Activated CD8-positive, alpha-beta T cell treated with anti-CD3 and anti-CD28 coated beads for 36 hours (primary cell): ENCODE measurements at regions of chr17 and their contacts with region 1.

Region 1: GRCh38 chr17:76467366-76467765 is at the start of gene AANAT:
- DNase-seq: no peak
- ATAC-seq: no peak
- H3K4me3 Mint-ChIP-seq: no peak within 1 kb of the TSS
- H3K27ac Mint-ChIP-seq: no peak within 1 kb of the TSS
- H3K4me1 Mint-ChIP-seq: peaks cover 2% of the 10 kb centered on the region
- H3K27me3 Mint-ChIP-seq: no peaks in the 10 kb centered on the region
- CTCF ChIP-seq: no peak
- total RNA-seq, gene AANAT: 0.34 TPM in 1 of 2 experiments, not detected in the other

Region 2: GRCh38 chr17:76452660-76453430 is 14.5 kb before region 1 on chr17 and contains the start of gene UBE2O:
- CTCF ChIA-PET with region 1: interaction called, 14 read pairs
- POLR2A ChIA-PET with region 1: interaction called, 3 read pairs
- intact Hi-C with region 1: no loop called
- DNase-seq: peak; percentile 93
- ATAC-seq: peak; percentile 97
- H3K4me3 Mint-ChIP-seq: peak within 1 kb of the TSS; percentile 90
- H3K27ac Mint-ChIP-seq: peak within 1 kb of the TSS; percentile 55
- H3K4me1 Mint-ChIP-seq: peaks cover 37% of the 10 kb centered on the region
- H3K27me3 Mint-ChIP-seq: no peaks in the 10 kb centered on the region
- CTCF ChIP-seq: peak; percentile 42
- total RNA-seq, gene UBE2O: 36.8 to 39.5 TPM

Region 3: DNA sequence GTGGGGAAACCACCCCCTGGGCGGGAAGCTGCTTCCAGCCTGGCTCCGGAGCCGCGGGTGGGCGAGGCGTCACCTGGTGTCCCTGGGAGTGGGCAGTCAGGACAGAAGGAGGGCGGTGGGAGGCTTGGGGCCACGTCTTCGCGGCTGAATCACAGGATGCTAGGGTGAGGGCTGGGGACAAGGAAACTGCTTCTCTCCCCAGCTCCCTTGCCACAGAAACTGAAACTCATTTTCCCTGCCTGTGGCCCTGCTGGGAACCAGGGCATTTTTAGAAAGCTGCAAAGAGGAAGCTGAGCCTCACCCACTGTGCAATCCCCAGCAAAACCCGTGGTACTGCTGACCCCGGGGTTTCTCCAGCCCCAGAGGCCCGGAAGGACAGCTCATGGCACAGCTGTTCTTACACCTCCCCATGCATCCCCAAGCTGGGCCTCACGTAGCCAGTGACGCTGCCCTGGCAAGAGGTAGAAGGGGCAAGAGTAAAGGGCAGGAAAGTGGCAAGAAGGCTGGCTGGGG is 25.7 kb after region 1 on chr17:
- CTCF ChIA-PET with region 1: interaction called, 15 read pairs
- POLR2A ChIA-PET with region 1: interaction called, 3 read pairs
- intact Hi-C with region 1: no loop called
- DNase-seq: peak; percentile 80
- ATAC-seq: peak; percentile 64
- H3K4me3 Mint-ChIP-seq: peak overlapping the region; percentile 58
- H3K27ac Mint-ChIP-seq: peak overlapping the region; percentile 90
- H3K4me1 Mint-ChIP-seq: peaks cover 55% of the 10 kb centered on the region
- H3K27me3 Mint-ChIP-seq: no peaks in the 10 kb centered on the region
- CTCF ChIP-seq: no peak

Region 4: DNA sequence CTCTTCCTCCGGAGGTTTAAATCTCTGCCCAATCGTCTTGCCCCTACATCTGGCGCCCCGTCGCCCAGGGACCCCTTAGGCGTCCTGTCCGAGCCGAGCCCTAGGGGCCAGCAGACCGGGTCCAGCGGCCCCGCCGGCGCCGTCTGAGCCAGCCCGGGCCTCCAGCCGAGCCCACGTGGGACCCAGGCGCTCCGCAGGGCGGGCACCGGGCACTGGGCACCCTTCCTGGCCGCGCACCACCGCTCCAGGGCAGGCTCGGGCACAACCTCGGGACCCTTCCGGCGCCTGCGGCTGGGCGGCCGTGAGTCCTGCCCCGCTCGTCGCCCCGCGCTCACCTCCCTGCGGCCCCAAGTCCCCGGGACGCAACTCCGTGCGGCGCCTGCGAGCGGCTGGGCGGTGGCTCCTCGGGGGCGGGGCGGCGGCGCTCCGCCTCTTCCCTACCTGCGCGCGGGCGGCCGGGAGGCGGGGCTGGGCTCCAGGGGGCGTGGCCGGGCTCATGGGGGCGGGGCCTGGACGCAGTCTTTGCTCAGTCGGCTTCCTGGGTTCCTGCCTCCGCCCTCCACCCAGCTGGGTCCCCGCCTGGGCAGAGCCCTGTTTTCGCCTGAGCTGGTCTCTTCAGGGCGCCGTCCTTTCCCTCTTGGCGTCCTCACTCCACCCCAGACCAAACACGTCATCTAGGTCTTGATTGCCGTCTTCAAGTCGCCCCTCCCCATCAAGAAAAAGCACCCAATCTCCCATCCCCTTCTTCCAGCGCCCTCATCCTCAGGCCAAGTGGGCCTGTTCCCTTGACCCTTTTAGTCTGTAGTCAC is 33.9 kb after region 1 on chr17 and contains the start of gene RHBDF2:
- CTCF ChIA-PET with region 1: interaction called, 83 read pairs
- POLR2A ChIA-PET with region 1: interaction called, 10 read pairs
- intact Hi-C with region 1: loop called (anchors 1 kb)
- DNase-seq: peak; percentile 95
- ATAC-seq: peak; percentile 97
- H3K4me3 Mint-ChIP-seq: peak within 1 kb of the TSS; percentile 90
- H3K27ac Mint-ChIP-seq: peak within 1 kb of the TSS; percentile 92
- H3K4me1 Mint-ChIP-seq: peaks cover 40% of the 10 kb centered on the region
- H3K27me3 Mint-ChIP-seq: no peaks in the 10 kb centered on the region
- CTCF ChIP-seq: no peak
- total RNA-seq, gene RHBDF2: 19.9 to 20.4 TPM

Region 5: GRCh38 chr17:76506408-76507349 is 39.3 kb after region 1 on chr17:
- CTCF ChIA-PET with region 1: interaction called, 83 read pairs
- POLR2A ChIA-PET with region 1: interaction called, 10 read pairs
- intact Hi-C with region 1: loop called (anchors 1 kb)
- DNase-seq: peak; percentile 92
- ATAC-seq: peak; percentile 89
- H3K4me3 Mint-ChIP-seq: no peak overlapping the region
- H3K27ac Mint-ChIP-seq: no peak overlapping the region
- H3K4me1 Mint-ChIP-seq: peaks cover 15% of the 10 kb centered on the region
- H3K27me3 Mint-ChIP-seq: no peaks in the 10 kb centered on the region
- CTCF ChIP-seq: peak; percentile 82

Region 6: DNA sequence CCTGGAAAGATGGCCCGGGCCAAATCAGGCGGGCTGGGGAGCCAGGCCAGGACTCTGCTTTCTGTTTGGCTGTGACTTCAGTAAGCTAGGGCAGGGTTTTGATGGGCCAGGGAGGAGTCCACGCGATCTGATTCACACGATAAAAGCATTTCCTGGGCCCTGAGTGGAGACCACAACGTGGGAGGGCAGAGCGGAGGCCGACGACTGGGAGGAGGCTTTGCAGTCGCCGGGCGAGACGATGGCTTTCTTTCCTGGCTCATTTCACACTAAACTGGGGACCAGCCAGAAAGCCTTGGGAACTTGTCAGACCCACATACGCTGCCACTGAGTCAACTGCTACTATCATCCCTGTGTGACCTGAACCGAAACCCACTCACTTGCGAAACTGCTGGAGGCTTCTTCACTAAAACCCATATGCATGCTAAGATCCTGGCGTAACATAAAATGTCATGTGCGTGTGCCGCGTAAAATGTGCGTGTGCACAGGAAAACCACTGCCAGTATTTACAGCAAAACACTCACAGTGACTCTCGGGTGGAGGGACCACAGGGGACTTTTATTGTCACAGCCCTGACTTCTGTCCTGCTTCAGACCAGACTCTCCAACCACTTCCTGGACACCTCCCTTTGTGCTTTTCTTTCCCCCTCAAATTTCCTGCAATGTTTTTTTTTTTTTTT is 48.0 kb after region 1 on chr17:
- CTCF ChIA-PET with region 1: interaction called, 14 read pairs
- POLR2A ChIA-PET with region 1: no interaction called
- intact Hi-C with region 1: no loop called
- DNase-seq: peak; percentile 88
- ATAC-seq: peak; percentile 87
- H3K4me3 Mint-ChIP-seq: peak overlapping the region; percentile 58
- H3K27ac Mint-ChIP-seq: peak overlapping the region; percentile 90
- H3K4me1 Mint-ChIP-seq: peaks cover 35% of the 10 kb centered on the region
- H3K27me3 Mint-ChIP-seq: no peaks in the 10 kb centered on the region
- CTCF ChIP-seq: no peak